ENCODE measurements at regions of chr16 and their contacts with region 1.

Region 1: DNA sequence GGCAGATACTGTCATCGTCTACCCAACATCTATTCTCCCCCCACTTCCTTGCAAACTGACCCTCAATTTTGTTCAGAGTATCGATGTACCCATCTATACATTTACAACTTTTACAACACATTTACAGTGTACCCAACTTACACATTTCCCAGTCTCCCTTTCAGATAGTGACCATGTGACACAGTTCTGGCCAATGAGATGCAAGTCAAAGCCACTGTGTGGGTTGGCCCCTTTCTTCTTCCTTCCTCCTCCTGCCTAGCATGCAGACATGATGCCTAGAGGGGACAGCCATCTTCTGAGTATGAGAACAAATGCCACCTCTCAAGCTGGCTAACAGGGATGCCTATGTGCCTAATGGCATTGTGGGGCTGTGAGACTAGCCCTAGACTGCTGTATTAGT is 11.3 kb upstream of the NFAT5 start:
- DNase-seq: no peak
- H3K4me3 ChIP-seq: no peak overlapping the region
- H3K27ac ChIP-seq: no peak overlapping the region
- H3K4me1 ChIP-seq: no peaks in the 10 kb centered on the region
- H3K27me3 ChIP-seq: no peaks in the 10 kb centered on the region
- CTCF ChIP-seq: no peak

Region 2: DNA sequence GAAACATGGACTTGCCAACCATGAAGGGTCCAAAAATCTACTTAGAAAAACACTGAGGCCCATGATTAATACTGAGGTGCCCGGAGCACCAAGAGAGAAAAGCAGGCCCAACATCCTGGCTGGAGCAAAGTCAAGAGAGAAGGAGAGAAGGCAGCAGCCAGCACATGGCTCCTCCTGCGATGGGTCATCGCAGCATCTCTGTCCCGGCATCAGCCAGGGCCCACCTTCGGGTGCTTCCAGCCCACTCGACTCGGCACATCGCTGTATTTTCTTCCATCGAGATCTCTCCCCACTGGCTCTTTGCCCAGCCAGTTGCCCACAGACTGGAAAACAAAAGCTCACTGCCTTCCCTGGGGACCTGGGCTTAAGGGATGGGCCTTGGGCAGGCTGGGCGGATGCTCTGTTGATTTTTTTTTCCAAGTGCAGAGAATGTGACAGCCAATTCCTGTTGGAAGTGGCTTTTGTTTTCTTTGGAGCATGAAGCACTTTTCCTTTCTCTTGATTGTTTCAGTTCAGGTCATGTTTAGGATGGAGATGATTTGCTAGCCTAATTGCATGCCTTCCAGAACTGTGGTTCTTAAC is 72.0 kb before region 1 on chr16:
- CTCF ChIA-PET with region 1: no interaction called
- dilution Hi-C with region 1: no loop called
- in situ Hi-C with region 1: loop called in 1 of 2 experiments (anchors 10 kb)
- intact Hi-C with region 1: no loop called
- DNase-seq: no peak
- H3K4me3 ChIP-seq: no peak overlapping the region
- H3K27ac ChIP-seq: peak overlapping the region; percentile 25
- H3K4me1 ChIP-seq: peaks cover 30% of the 10 kb centered on the region
- H3K27me3 ChIP-seq: no peaks in the 10 kb centered on the region
- CTCF ChIP-seq: no peak

Region 3: GRCh38 chr16:69538808-69539207 is 15.7 kb before region 1 on chr16:
- CTCF ChIA-PET with region 1: interaction called, 10 read pairs
- dilution Hi-C with region 1: no loop called
- in situ Hi-C with region 1: no loop called
- intact Hi-C with region 1: no loop called
- DNase-seq: no peak
- H3K4me3 ChIP-seq: no peak overlapping the region
- H3K27ac ChIP-seq: no peak overlapping the region
- H3K4me1 ChIP-seq: peaks cover 28% of the 10 kb centered on the region
- H3K27me3 ChIP-seq: no peaks in the 10 kb centered on the region
- CTCF ChIP-seq: no peak

Region 4: DNA sequence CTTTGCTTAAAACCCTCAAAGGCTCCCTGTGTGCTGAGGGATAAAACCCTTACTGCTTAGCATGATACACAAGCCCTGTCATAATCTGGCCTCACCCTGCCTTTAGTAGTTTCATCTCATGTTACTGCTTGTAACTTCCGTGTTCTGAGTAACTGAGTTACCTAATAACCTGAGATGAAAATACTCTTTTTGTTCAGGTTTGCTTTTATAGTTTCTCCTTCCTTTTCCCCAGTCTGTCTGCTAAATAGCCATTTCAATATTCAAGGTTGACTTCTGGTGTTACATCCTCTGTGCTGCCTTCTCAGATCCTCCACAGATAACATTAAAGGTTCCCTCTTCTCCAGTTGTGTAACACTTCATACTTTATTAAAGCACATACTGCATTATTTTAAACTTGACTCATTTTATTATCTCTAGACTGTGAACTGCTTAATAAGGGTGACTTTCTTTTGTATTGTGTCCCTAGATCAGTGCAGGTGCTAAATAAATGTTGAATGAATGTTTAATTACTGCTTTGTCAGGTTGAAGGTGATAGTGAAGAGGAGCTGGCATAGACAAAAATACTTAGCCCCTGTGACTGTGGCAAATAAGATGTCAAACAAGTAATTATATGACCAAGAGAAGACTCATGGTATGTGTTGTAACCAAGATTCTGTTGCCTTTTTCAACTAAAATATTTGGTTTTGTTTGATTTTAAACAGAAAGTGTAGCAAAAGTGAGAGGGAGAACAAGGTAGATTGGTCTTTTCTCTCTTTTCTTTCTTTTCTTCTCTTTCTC is 59.1 kb after region 1 on chr16:
- CTCF ChIA-PET with region 1: no interaction called
- dilution Hi-C with region 1: no loop called
- in situ Hi-C with region 1: no loop called
- intact Hi-C with region 1: no loop called
- DNase-seq: peak; percentile 88
- H3K4me3 ChIP-seq: peak overlapping the region in 1 of 3 experiments; percentile 3
- H3K27ac ChIP-seq: peak overlapping the region; percentile 94
- H3K4me1 ChIP-seq: peaks cover 24% of the 10 kb centered on the region
- H3K27me3 ChIP-seq: no peaks in the 10 kb centered on the region
- CTCF ChIP-seq: no peak

Measured in mammary epithelial cell (primary cell).